GM18951 (cell line): ENCODE measurements at regions of chr1 and their contacts with region 1.

Region 1: GRCh38 chr1:54996359-54996868 is 2.3 kb upstream of the BSND start:
- POLR2A ChIP-seq: no peak

Region 2: DNA sequence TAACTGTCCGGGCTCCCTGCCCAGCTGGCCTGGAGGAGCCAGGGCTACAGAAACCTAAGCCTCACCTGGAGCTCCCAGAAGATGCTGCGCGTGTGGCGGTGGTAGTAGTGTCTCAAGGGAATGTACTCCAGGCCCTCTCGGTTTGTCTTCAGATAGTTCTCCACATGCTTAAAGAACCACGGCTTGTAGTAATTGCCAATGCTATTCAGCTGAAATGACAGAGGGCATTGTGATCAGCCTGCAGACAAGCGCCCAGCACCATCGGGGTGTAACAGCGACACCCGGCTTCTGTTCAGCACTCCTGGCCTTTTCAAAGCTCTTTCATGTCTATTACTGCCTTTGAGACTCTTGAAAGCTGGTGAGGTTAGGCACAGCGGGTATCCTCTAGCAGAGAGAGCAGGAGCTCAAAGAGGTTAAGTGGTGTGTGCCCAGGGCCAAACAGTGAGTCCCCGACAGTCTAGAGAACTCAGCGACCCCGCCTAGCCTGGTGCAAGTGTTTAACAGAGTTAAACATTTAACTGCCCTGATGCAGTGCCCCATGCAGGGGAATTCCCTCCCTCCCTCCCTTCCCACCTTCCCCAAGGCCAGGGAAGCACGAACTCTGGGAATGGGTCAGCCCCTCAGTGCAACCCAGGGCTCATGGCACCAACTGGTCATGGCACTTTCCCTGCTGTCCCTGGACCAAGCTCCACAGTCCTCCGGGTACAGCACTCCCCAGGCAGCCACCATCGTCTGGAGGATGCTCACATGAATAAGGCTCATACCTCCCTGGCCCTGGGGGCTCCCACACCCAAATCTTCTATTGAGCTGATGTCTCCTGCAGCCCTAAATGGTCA is 131.0 kb before region 1 on chr1:
- in situ Hi-C with region 1: no loop called
- POLR2A ChIP-seq: no peak

Region 3: GRCh38 chr1:54950369-54951163 is 45.8 kb before region 1 on chr1:
- in situ Hi-C with region 1: loop called (anchors 5 kb)
- POLR2A ChIP-seq: no peak